Breast epithelium (tissue), 4 donors: ENCODE measurements at regions of chr1 and their contacts with region 1.

Region 1: DNA sequence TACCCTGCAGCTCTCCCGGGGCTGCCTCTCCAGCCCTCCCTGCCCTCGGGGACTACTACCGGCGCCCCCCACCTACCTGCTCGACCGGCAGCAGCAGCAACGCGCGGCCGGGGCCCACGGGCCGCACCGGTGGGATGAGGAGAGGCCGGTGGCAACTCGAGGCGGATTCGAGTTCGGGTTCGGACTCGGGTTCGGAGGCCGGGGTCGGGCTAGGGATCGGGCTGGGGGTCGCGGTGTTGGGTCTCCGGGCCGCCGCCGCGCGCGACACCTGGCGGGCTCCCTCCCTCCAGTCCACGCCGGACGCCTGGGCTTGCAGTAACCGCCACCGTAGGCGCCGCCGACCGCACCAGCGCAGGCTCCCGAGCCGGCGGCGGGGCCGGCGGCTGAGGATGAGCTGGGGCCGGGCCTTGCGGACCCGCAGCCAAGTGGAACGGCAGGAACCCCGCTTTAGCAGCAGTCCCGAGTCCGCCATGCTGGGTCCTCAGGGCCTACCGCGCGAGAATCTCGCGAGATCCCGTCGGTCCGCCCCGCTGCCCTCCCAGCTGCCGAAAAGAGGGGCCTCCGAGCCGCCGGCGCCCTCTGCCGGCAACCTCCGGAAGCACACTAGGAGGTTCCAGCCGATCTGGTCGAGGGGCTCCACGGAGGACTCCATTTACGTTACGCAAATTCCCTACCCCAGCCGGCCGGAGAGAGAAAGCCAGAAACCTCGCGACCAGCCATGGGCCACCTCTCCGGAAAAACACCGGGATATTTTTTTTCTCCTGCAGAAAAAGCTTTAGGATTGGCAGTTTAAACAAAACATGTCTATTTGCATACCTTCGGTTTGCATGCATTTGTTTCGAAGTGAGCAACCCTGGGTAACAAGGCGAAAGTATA is at the start of gene NOL9:
- DNase-seq: peak; percentile 87 to 93
- H3K4me3 ChIP-seq: peak within 1 kb of the TSS; percentile 97 to 99 (median 97)
- H3K27ac ChIP-seq: peak within 1 kb of the TSS; percentile 82 to 85
- H3K4me1 ChIP-seq: peaks cover 7 to 8% of the 10 kb centered on the region in 2 donors
- H3K27me3 ChIP-seq: no peaks in the 10 kb centered on the region
- CTCF ChIP-seq: peak; percentile 91 to 98 (median 97)
- POLR2A ChIP-seq: no peak
- total RNA-seq, gene NOL9: 14.7 to 29.6 (median 25.2) TPM

Region 2: DNA sequence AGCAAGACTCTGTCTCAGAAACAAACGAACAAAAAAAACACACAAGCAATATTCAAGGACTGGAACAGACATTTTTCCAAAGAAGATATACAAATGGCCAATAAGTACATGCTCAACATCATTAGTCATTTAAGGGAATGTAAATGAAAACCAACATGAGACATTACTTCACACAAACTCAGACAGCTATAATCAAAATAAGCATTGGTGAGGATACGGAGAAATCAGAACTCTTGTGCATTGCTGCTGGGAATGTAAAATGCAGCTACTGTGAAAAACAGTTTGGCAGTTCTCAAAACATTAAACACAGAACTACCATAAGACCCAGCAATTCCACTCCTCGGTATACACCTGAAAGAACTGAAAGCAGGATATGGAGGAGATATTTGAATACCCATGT is 15.3 kb before region 1 on chr1:
- intact Hi-C with region 1: no loop called
- DNase-seq: no peak
- H3K4me3 ChIP-seq: no peak overlapping the region
- H3K27ac ChIP-seq: no peak overlapping the region
- H3K4me1 ChIP-seq: no peaks in the 10 kb centered on the region
- H3K27me3 ChIP-seq: no peaks in the 10 kb centered on the region
- CTCF ChIP-seq: no peak
- POLR2A ChIP-seq: no peak

Region 3: DNA sequence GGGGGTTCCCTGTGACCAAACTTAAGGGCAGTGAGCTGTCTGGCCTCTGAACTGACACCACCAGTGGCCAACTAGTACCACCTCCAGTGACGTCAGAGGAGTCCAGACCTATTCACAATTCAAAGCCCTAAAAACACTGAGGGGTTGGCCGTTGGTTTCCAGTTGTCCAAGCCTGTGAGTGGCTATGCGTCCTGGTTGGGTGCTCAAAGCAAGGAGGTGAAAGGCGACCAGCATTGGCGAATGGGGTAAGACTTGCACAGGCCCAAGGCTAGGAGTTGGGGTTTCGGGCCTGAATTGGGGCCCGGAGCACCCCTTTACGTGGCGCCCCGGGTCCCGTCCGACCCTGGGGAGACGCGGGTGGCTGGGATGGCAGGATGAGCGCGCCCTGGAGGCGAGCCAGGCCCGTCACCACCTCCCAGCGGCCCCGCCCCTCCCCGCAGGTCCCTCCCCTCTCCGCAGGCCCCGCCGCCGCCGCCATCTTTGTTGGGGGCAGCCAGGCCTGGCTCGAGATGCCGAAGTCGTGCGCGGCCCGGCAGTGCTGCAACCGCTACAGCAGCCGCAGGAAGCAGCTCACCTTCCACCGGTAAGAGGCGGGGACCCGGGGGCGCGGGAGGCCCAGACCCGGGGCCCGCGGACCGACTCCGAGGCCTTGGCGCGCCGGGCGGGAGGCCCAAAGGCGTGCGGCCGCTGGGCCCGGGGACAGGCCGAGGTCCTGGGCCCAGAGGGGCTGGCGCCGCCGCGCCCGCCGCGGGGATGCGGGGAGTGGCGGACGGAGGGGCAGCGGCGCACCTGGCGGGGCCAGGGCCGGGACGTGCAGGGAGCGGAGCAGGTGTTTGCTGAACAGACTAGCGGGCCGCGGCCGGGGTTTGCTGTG is 70.7 kb after region 1 on chr1 and contains the start of gene THAP3:
- intact Hi-C with region 1: loop called (anchors 10 kb)
- DNase-seq: peak; percentile 76 to 90
- H3K4me3 ChIP-seq: peak within 1 kb of the TSS; percentile 75 to 97 (median 80)
- H3K27ac ChIP-seq: peak within 1 kb of the TSS; percentile 92 to 95
- H3K4me1 ChIP-seq: peaks cover 5 to 26% of the 10 kb centered on the region in 2 donors
- H3K27me3 ChIP-seq: no peaks in the 10 kb centered on the region
- CTCF ChIP-seq: no peak
- POLR2A ChIP-seq: no peak
- total RNA-seq, gene THAP3: 20.3 to 28.2 (median 28.1) TPM